ENCODE measurements at regions of chr2 and their contacts with region 1.

Region 1: GRCh38 chr2:173210270-173211196 is 134.9 kb downstream of the MAP3K20 start:
- DNase-seq: no peak
- ATAC-seq: peak; percentile 90

Region 2: DNA sequence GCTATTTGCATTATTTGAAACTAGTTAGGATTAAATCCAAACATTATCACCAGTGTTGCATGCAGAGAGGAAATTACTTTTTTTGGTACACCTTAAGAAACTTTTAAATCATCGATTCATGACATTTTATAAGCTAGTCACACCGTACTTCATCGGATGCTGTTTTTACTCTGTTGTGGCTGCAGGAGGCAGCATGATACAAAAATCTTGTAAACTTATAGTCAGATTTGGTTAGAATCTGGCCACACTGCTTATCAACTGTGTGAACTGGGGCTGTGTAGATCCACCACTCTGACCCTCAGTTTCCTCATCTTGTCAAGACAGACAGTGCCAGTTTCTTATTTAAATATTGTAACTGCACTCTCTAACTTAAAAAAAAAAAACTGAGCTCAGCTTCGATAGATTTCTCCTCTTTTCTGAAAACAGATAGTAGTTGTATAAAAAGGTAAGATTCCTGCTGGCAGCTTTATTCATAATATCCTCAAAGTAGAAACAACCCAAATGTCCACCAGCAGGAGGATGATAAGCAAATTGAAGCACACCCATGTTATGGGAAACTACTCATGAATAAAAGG is 397.1 kb before region 1 on chr2:
- intact Hi-C with region 1: loop called (anchors 5 kb)
- DNase-seq: no peak
- ATAC-seq: peak; percentile 42

Region 3: DNA sequence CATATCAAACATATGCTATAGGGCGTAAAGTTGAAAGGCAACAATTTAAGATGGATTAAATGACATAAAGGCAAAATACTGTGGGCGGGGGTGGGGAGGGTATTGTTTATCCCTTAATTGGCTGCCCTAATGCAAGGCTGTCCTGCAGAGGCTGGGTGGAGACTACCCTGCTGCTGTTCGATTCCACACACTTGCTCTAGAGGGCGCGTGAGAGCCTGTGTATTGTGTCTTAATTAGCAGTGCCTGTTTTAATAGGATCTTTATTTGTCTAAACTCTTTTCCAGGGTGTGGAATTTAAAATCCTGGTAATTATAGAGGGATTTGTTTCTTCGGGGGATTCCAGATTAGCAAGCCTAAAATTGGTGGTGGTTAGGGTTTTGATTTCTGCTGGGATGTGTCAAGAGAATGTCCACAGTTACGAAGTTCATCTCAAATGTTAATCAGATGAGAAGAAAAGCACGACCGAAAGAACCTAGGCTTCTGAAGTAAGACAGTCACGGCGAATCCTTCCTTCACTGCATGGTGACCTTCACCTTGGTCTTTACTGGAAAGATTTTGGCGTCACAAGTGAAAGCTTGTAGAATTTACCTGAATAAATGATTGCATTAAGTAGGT is 238.4 kb before region 1 on chr2:
- intact Hi-C with region 1: loop called (anchors 5 kb)
- DNase-seq: no peak
- ATAC-seq: peak; percentile 45

Region 4: DNA sequence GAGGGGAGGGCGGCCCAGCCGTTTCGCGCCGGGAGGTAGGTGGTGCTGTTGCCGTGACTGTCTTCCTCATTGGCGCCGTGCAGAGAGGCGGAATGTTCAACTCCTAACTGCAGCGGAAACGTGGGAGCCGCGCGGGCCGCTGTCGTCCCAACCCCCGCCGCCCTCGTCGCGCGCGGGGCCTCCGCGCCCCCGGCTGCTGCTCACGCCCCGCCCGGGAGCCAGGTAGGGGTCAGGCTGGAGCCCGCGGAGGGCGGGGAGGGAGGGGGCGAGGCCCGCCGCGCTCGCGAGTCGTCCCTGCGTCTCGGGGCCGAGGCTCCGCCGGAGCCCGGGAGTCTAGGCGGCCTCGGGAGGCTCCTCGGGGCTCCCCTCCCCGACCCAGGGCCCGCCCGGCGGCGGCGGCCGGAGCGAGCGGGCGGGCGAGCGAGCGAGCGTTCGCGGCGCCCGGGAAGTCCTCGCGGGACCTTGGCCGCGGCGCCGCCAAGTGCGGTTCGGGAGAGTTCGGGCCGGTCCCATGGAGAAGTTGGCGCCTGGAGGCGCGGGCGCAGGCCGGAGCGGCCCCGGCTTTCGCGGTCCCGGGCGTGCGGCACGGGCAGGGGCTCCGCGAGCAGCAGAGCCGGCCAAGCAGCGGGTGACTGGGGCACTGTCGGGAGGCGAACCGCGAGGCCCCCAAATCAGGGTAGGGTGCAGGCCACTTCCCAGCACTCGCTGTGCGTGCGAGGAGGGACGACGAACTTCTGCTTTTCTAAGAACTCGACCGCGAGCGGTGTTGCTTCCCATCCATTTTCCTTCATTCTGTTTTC is 134.6 kb before region 1 on chr2 and contains the start of gene MAP3K20:
- intact Hi-C with region 1: loop called (anchors 1 kb)
- DNase-seq: peak; percentile 90
- ATAC-seq: peak; percentile 89
- total RNA-seq, gene MAP3K20: 435 TPM

Region 5: DNA sequence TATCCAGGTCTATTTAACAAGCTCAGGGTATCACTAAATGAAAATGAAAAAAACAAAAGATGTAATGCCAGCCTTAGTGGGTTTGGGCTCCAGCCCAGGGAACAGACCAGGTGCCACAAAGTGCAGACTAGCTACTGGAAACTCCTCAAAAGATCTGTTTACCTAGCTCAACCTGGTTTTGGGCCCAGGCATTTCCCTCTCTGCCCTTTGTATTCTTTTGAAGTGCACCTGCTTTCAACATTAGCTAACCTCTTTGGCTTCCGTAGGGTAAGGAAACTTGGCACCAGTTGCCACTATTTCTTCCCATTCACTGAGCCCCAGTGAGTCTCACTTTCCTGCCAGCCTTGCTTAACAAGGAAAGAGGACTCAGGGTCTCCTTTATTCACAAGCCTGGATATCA is 20.5 kb after region 1 on chr2:
- intact Hi-C with region 1: no loop called
- DNase-seq: no peak
- ATAC-seq: peak; percentile 34